ENCODE measurements at regions of chr15 and their contacts with region 1.

Region 1: DNA sequence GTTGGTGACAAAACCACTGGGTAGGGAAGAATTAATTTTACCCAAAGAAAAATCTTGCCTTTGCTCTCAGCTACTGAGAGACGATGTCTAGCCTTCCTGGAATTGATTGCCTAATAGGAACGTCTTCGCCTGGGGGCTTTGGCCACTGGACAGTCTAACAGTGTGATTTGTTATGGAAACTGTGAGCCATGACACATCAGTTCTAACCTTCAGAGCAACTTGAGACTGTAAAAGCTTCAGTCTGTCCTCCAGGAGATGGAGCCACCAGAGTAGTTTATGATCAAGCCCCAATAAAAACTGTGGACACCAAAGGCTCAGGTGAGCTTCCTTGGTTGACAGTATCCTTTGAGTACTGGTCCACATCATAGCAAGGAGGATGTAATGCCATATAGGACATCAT is 235.8 kb upstream of the TMCO5A start:
- DNase-seq: no peak
- H3K4me3 Mint-ChIP-seq: no peak overlapping the region
- H3K27ac Mint-ChIP-seq: no peak overlapping the region
- H3K4me1 Mint-ChIP-seq: no peaks in the 10 kb centered on the region
- H3K27me3 Mint-ChIP-seq: no peaks in the 10 kb centered on the region

Region 2: DNA sequence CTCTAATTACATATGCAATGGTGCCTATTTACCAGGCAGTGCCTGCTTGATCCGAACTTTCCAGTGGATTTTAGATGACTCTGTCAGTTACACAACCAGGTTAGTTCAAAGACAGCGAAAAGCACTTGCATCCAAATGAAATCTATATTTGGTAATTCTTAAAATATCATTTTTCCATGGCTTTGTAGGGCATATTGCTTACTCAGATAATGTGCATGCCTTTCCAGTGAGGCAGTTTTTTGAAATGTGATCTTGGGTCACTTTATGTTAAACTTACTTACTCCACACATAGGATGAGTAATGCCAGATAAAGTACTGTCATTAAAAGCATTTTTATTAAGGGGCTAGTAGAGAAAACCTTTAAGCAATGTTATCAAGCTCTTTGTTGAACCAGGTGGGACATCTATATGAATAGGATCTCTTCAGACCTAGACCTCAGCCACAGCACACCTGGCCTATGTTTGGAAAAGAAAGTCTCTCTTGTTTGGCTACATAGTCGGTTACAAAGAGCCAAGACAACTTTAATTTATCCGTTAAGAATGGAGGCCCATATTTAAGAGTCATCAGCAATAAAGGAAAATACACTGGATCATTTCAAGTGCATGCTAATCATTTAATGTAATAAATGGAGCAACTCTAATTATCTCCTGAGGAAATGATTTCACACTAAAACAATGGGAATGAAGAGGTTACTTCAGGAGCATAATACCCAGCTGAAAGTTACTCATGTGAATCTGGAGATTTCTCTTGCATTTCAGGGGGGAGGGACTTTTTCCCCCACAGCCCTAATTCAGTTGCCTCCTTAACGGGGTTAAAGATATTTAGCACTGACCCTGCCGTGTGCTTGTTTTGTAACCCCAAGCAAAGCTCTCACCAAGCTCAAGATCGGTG is 179.4 kb after region 1 on chr15:
- intact Hi-C with region 1: loop called (anchors 10 kb)
- DNase-seq: no peak
- H3K4me3 Mint-ChIP-seq: no peak overlapping the region
- H3K27ac Mint-ChIP-seq: no peak overlapping the region
- H3K4me1 Mint-ChIP-seq: no peaks in the 10 kb centered on the region
- H3K27me3 Mint-ChIP-seq: no peaks in the 10 kb centered on the region